Sciatic nerve (tissue), 2 donors: ENCODE measurements at regions of chr17 and their contacts with region 1.

Region 1: DNA sequence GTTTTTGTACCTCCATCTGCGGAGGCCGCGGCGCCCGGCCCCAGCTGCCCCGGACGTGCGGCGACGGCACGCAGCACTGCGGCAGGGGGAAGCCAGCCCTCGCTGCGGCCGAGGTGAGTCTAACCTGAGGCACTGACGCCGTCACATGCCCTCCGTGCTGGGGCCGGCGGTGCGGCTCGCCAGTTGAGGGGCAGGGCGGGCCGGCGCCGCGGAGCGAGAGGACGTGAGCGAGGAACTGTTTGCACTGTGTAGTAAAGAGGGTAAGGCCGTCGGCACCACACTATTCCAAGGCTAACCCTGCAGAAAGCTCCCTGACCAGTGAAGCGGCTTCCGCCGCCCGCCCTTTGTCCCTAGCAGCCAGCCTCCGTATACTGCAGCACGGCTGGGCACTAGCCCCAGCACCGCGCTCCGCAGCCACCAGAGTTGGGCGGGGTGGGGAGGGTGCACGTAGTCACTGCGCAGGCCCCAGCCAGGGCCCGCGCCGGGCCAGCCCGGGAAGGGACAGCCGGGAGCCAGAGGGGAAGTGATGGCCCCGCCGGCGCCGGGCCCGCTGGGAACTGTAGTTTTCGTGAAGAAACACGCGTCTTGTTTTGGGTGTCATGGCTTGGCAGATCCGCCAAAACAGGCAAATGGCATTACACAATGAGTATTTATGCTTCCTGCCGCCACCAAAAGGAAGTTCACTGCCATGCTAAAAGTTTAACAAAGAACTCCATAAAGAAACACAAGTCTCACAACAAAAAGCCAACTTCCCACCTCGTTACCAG is 580 bp upstream of the KANSL1 start:
- DNase-seq: peak; percentile 96
- ATAC-seq: peak; percentile 97

Region 2: GRCh38 chr17:46046957-46047356 is 146.9 kb before region 1 on chr17:
- intact Hi-C with region 1: loop called (anchors 5 kb)
- DNase-seq: no peak
- ATAC-seq: peak; percentile 41

Region 3: DNA sequence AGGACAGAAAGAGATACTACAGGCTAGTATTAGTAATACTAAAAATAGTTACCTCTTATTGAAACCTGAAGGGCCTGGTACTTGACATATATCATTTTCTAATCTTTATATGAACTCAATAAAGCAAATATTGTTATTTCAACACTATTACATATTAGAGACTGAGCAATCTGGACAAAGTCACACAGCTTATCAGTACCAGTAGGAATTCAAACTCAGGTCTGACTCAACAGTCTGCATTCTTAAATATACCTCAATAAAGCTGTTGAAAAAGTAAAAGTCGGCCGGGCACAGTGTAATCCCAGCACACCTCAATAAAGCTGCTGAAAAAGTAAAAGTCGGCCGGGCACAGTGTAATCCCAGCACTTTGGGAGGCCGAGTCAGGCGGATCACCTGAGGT is 68.0 kb before region 1 on chr17:
- intact Hi-C with region 1: no loop called
- DNase-seq: no peak
- ATAC-seq: no peak